Naive thymus-derived CD8-positive, alpha-beta T cell (primary cell): ENCODE measurements at regions of chr14 and their contacts with region 1.

Region 1: DNA sequence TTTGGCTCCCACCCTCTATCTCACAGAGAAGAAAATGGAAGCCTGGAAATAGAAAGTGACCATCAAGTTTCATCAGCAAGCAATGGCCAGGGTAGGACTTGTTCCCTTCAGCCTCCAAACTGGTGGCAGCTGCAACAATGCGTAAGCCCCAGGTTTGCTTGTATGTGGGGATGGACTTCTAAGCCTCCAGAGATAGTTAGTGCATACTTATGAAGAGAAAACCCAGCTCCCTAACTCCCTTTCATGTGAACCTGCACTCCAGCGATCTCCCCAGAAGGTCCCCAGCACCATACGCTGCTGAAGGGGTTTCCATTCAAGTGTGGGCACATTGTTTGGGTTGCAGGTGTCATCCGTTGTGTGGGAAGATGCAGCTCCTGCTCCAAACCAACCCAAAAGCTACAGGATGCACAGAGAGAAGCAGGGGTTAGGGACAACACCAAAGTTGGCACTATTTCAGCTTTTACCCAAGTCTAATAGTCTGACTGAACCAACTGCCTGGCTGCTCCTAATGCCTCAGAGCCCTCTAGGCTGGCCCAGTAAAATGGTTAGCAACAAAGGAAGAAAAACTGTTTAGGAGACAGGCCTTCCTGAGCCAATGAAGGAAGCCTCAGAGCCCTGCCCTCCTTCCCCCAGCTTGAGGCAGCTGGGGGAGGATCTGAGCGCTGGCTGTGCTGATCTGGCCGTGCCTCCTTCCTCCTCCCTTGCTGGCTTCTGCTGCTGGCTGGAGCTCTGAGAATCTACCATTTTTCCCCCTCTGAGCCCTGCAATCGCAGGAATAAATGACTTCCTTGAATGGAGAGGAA is 12.3 kb downstream of the ZFP36L1 start:
- DNase-seq: peak in 4 of 10 donors; percentile 31 to 47 (median 34)
- ATAC-seq: peak; percentile 16 to 17
- H3K4me3 Mint-ChIP-seq: peak overlapping the region; percentile 75 to 89 (median 84)
- H3K27ac Mint-ChIP-seq: peak overlapping the region; percentile 85 to 99 (median 93)
- H3K4me1 Mint-ChIP-seq: peaks cover 39 to 87% (median 80%) of the 10 kb centered on the region in 4 donors
- H3K27me3 Mint-ChIP-seq: no peaks in the 10 kb centered on the region

Region 2: GRCh38 chr14:68248481-68249255 is 531.9 kb before region 1 on chr14:
- POLR2A ChIA-PET with region 1: interaction called, 150 read pairs
- DNase-seq: peak in 6 of 10 donors; percentile 23 to 66 (median 46)
- ATAC-seq: peak; percentile 79 to 82
- H3K4me3 Mint-ChIP-seq: peak overlapping the region in 1 of 10 donors; percentile 49
- H3K27ac Mint-ChIP-seq: peak overlapping the region in 7 of 10 donors; percentile 9 to 68 (median 37)
- H3K4me1 Mint-ChIP-seq: peaks cover 12 to 54% (median 34%) of the 10 kb centered on the region in 4 donors
- H3K27me3 Mint-ChIP-seq: no peaks in the 10 kb centered on the region

Region 3: GRCh38 chr14:68685419-68686204 is 94.9 kb before region 1 on chr14:
- POLR2A ChIA-PET with region 1: interaction called, 51 read pairs
- DNase-seq: peak; percentile 39 to 93 (median 80)
- ATAC-seq: peak; percentile 86 to 88
- H3K4me3 Mint-ChIP-seq: peak overlapping the region in 9 of 10 donors; percentile 32 to 77 (median 72)
- H3K27ac Mint-ChIP-seq: peak overlapping the region; percentile 93 to 98 (median 96)
- H3K4me1 Mint-ChIP-seq: peaks cover 36 to 82% (median 70%) of the 10 kb centered on the region in 4 donors
- H3K27me3 Mint-ChIP-seq: no peaks in the 10 kb centered on the region